ENCODE measurements at regions of chr18 and their contacts with region 1.

Region 1: GRCh38 chr18:31419457-31419932 is 28.0 kb upstream of the DSG3 start:
- DNase-seq: no peak
- H3K4me3 ChIP-seq: no peak overlapping the region
- H3K27ac ChIP-seq: no peak overlapping the region
- H3K4me1 ChIP-seq: no peaks in the 10 kb centered on the region
- H3K27me3 ChIP-seq: no peaks in the 10 kb centered on the region
- CTCF ChIP-seq: no peak
- POLR2A ChIP-seq: no peak

Region 2: GRCh38 chr18:31469629-31470028 is 50.1 kb after region 1 on chr18:
- intact Hi-C with region 1: loop called (anchors 10 kb)
- DNase-seq: no peak
- H3K4me3 ChIP-seq: no peak overlapping the region
- H3K27ac ChIP-seq: no peak overlapping the region
- H3K4me1 ChIP-seq: no peaks in the 10 kb centered on the region
- H3K27me3 ChIP-seq: no peaks in the 10 kb centered on the region
- CTCF ChIP-seq: no peak
- POLR2A ChIP-seq: no peak

Measured in prostate gland (tissue), 2 donors.